K562 (cell line): ENCODE measurements at regions of chr6 and their contacts with region 1.

Region 1: GRCh38 chr6:145814501-145815308 is at the start of gene FBXO30:
- DNase-seq: peak; percentile 94 to 96 (median 95)
- ATAC-seq: peak; percentile 84
- H3K4me3 ChIP-seq: peak within 1 kb of the TSS; percentile 66
- H3K27ac ChIP-seq: peak within 1 kb of the TSS; percentile 95
- H3K4me1 ChIP-seq: peaks cover 14 to 19% of the 10 kb centered on the region in 2 experiments
- H3K27me3 ChIP-seq: no peaks in the 10 kb centered on the region
- CTCF ChIP-seq: no peak
- EP300 ChIP-seq: no peak; the same call in 1 of the 2 replicates
- POLR2A ChIP-seq: peak; percentile 92
- RAD21 ChIP-seq: 0 out of 4 replicates have a peak, but pooled peaks of 1 of the 2 experiments have one; percentile 1
- polyA plus RNA-seq, gene FBXO30: 3.6 to 3.7 TPM

Region 2: GRCh38 chr6:145734486-145735355 is 80.0 kb before region 1 on chr6:
- CTCF ChIA-PET with region 1: no interaction called
- POLR2A ChIA-PET with region 1: interaction called, 16 read pairs
- in situ Hi-C with region 1: loop called (anchors 5 kb)
- intact Hi-C with region 1: loop called (anchors 1 kb)
- DNase-seq: peak; percentile 82 to 92 (median 83)
- ATAC-seq: peak; percentile 87
- H3K4me3 ChIP-seq: peak overlapping the region; percentile 54
- H3K27ac ChIP-seq: peak overlapping the region; percentile 92
- H3K4me1 ChIP-seq: peaks cover 16 to 21% of the 10 kb centered on the region in 2 experiments; a peak in 3 of 5 replicates
- H3K27me3 ChIP-seq: no peaks in the 10 kb centered on the region
- CTCF ChIP-seq: no peak
- EP300 ChIP-seq: no peak
- POLR2A ChIP-seq: peak; percentile 87
- RAD21 ChIP-seq: no peak

Region 3: DNA sequence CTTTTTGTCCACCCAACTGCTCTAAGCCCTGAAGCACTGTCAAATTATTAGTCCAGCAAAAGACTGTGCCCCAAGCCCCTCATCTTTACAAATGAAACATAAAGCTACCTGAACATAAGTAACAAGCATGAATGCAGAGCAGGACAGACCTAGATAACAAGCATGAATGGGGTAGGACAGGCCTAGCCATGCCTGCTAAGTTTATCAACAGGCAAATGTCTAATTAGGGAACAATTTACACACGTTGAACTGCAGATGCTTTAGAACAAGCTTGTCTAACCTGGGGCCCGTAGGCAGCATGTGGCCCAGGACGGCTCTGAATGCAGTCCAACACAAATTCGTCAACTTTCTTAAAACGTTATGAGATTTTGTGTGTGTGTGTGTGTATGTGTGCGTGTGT is 13.7 kb before region 1 on chr6:
- CTCF ChIA-PET with region 1: no interaction called
- POLR2A ChIA-PET with region 1: interaction called, 22 read pairs
- in situ Hi-C with region 1: no loop called
- intact Hi-C with region 1: no loop called
- DNase-seq: no peak
- ATAC-seq: peak; percentile 49
- H3K4me3 ChIP-seq: no peak overlapping the region
- H3K27ac ChIP-seq: no peak overlapping the region
- H3K4me1 ChIP-seq: no peaks in the 10 kb centered on the region; a peak in 1 of 5 replicates
- H3K27me3 ChIP-seq: no peaks in the 10 kb centered on the region
- CTCF ChIP-seq: no peak
- EP300 ChIP-seq: no peak
- POLR2A ChIP-seq: no peak
- RAD21 ChIP-seq: no peak

Region 4: DNA sequence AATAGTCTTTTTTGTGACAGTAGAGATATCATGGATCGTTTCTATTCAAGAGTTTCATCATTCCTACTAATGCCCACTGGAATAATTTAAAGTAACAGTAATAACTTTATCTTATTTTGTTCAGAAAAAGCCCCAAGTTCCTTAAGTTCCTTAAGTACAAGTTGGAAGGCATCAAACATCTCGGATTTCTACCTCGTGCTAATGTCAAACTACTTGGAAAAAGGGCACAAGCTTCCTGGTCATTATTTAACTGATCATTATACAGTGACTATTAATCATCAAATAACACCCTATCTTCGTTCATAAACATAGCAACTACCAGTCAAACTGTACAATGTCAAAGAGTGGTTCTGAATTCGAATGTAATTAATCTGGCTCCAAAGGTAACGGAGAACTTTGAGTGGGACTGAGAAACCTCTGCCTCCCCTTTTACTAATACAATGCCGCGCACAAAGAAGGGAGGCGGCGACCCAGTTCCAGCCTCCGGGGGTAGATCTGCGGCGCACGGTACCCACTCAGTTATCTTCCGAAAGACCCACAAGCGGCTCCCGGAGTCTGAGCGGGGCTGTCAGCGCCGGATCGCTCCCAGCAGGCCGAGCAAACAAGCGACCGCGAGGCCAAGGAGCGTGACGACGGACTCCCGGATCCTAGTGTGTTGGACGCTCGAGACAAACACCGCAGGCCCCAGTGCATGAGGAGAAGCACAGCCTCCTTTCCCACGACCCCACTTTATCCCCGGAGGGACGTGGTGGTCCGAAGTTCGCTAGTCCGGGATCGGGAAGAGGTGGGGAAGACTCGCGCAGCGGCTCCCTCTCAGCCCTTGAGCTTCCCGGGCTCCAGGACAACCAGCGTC is 148.7 kb after region 1 on chr6:
- CTCF ChIA-PET with region 1: no interaction called
- POLR2A ChIA-PET with region 1: interaction called, 3 read pairs
- in situ Hi-C with region 1: no loop called
- intact Hi-C with region 1: loop called (anchors 5 kb)
- DNase-seq: peak; percentile 55 to 67 (median 56)
- ATAC-seq: peak; percentile 66
- H3K4me3 ChIP-seq: peak overlapping the region; percentile 74
- H3K27ac ChIP-seq: peak overlapping the region; percentile 92
- H3K4me1 ChIP-seq: peaks cover 8 to 34% of the 10 kb centered on the region in 2 experiments; a peak in 4 of 5 replicates
- H3K27me3 ChIP-seq: no peaks in the 10 kb centered on the region
- CTCF ChIP-seq: no peak
- EP300 ChIP-seq: no peak; the same call in 1 of the 2 replicates
- POLR2A ChIP-seq: no peak
- RAD21 ChIP-seq: no peak